ENCODE measurements at regions of chr7 and their contacts with region 1.

Region 1: GRCh38 chr7:112112822-112113255 is 93.4 kb downstream of the DOCK4 start:
- DNase-seq: no peak
- ATAC-seq: peak; percentile 48
- H3K4me3 ChIP-seq: no peak overlapping the region
- H3K27ac ChIP-seq: no peak overlapping the region
- H3K4me1 ChIP-seq: no peaks in the 10 kb centered on the region
- H3K27me3 ChIP-seq: no peaks in the 10 kb centered on the region
- CTCF ChIP-seq: no peak

Region 2: GRCh38 chr7:112150823-112151641 is 38.2 kb after region 1 on chr7:
- CTCF ChIA-PET with region 1: no interaction called
- POLR2A ChIA-PET with region 1: interaction called, 10 read pairs
- intact Hi-C with region 1: no loop called
- DNase-seq: no peak
- ATAC-seq: no peak
- H3K4me3 ChIP-seq: no peak overlapping the region
- H3K27ac ChIP-seq: no peak overlapping the region
- H3K4me1 ChIP-seq: no peaks in the 10 kb centered on the region
- H3K27me3 ChIP-seq: no peaks in the 10 kb centered on the region
- CTCF ChIP-seq: no peak

Region 3: GRCh38 chr7:112806156-112806555 is 693.3 kb after region 1 on chr7:
- CTCF ChIA-PET with region 1: no interaction called
- POLR2A ChIA-PET with region 1: no interaction called
- intact Hi-C with region 1: no loop called
- DNase-seq: no peak
- ATAC-seq: no peak
- H3K4me3 ChIP-seq: no peak overlapping the region
- H3K27ac ChIP-seq: no peak overlapping the region
- H3K4me1 ChIP-seq: no peaks in the 10 kb centered on the region
- H3K27me3 ChIP-seq: peaks cover 27% of the 10 kb centered on the region
- CTCF ChIP-seq: no peak

Measured in PC-3 (cell line).